ENCODE measurements at regions of chrX and their contacts with region 1.

Region 1: DNA sequence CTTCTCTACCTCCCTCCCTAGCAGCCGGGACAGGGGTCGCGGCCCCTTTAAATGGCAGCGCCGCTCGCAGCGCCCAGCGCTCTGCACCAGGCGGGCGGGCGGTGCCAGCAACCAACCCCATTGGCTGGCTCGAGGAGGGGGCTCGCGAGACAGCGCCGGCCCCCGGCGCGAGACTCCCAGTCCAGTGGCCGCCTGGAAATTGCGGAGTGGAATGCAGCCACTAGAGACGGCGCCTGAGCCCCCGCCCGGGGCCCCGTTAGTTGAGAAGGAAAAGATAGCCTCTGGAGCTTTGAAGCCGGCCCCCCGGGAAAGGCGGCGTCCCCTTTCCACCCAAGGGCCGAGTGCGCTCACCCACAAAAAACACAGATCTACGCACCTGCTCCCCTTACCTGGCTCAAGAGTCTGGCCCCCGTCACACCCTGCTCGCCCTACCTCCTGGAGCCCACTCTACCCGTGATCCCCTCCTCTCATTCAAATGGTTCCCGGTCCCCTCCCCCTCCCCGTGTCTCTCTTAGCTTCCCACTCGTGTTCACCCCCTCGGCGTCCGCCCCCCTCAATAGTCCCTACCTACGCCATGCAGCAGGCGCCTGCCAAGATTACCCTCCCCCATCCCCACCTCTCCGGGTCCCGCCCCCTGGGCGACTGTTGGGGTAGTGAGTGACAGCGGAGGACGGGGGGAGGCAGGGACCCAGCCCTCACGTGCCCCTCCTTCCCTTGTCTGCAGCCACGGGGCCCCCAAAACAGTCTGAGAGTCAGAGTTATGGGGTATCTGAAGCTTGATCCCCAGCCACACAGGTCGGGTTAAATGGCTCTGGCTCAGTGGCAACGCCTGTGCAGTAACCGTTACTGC is at the start of gene ZMYM3:
- DNase-seq: peak; percentile 92
- H3K4me3 Mint-ChIP-seq: peak within 1 kb of the TSS; percentile 93
- H3K27ac Mint-ChIP-seq: peak within 1 kb of the TSS; percentile 88
- H3K4me1 Mint-ChIP-seq: peaks cover 28% of the 10 kb centered on the region
- H3K27me3 Mint-ChIP-seq: peaks cover 2% of the 10 kb centered on the region
- total RNA-seq, gene ZMYM3: 16.9 and 20.1 TPM in 2 replicates

Region 2: DNA sequence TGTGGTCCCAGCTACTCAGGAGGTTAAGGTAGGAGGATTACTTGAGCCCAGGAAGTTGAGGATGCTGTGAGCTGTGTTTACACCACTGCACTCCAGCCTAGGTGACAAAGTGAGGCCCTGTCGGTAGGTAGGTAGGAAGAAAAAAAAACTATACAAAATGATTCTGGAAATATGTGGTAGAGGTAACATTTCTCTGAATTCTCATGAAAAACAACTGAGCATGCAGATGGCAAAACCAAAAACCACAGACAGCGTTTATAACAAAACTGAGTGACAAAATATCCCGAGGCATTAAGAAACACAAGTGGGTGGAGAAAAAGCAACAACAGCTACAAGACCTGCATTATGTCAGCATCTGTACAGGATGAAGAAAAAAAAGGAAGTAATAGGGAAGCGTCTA is 598.0 kb before region 1 on chrX:
- intact Hi-C with region 1: loop called (anchors 5 kb)
- DNase-seq: peak; percentile 61
- H3K4me3 Mint-ChIP-seq: peak overlapping the region; percentile 22
- H3K27ac Mint-ChIP-seq: peak overlapping the region; percentile 81
- H3K4me1 Mint-ChIP-seq: peaks cover 9% of the 10 kb centered on the region
- H3K27me3 Mint-ChIP-seq: no peaks in the 10 kb centered on the region

Region 3: GRCh38 chrX:71103110-71103983 is 151.0 kb before region 1 on chrX:
- intact Hi-C with region 1: loop called (anchors 10 kb)
- DNase-seq: peak; percentile 82
- H3K4me3 Mint-ChIP-seq: peak overlapping the region; percentile 83
- H3K27ac Mint-ChIP-seq: peak overlapping the region; percentile 92
- H3K4me1 Mint-ChIP-seq: peaks cover 60% of the 10 kb centered on the region
- H3K27me3 Mint-ChIP-seq: no peaks in the 10 kb centered on the region

Region 4: DNA sequence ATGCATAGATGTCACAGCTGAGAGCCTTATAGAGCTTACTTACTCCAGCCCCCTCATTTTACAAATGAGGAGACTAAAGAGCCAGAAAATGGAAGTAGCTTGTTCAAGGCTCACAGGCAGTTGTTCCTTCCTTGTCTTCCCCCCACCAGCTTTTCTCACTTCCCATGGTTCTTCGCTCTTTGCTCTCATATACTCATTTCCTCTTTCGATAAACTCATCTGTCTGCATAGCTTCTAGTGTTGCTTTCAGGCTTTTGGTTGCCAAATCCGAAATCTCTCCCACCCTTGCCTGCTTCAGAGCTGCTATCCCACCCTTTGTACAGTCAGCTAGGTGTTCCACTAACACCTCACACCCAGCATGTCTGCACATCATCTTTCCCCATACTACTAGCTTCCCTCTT is 56.3 kb before region 1 on chrX:
- intact Hi-C with region 1: loop called (anchors 5 kb)
- DNase-seq: peak; percentile 67
- H3K4me3 Mint-ChIP-seq: peak overlapping the region; percentile 91
- H3K27ac Mint-ChIP-seq: peak overlapping the region; percentile 88
- H3K4me1 Mint-ChIP-seq: peaks cover 18% of the 10 kb centered on the region
- H3K27me3 Mint-ChIP-seq: no peaks in the 10 kb centered on the region

Region 5: DNA sequence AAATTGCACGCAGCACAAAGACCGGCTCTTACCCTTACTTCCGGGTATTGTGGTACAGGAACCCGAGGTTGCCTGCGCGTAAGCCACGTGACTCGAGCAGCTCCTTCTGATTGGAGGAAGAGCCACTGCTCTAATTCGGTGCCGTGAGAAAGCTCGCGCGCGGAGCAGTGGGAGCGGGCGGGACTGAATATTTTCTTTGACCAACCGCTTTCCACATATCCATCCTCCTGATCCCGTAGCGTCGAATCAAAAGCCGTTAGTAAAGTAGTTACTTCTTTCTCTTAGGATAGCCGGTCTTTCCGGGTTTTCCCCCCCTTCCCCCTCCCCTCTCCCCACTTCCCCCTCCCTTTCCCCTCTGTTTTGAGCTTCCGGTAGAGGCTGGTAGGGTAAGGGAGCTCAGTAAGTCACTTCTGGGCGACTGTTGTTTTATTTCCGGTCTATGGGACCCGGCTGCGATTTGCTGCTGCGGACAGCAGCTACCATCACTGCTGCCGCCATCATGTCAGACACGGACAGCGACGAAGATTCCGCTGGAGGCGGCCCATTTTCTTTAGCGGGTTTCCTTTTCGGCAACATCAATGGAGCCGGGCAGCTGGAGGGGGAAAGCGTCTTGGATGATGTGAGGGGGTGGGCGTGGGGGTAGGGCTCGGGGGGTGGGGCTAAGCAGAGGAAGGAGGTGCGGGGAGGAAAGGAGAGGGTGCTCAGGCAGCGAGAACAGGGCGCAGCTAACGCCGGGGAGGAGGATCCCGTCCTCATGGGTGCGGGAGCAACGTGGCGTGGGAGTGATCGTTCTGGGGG is 111.8 kb after region 1 on chrX and contains the start of gene TAF1:
- intact Hi-C with region 1: loop called (anchors 2 kb)
- DNase-seq: peak; percentile 96
- H3K4me3 Mint-ChIP-seq: peak within 1 kb of the TSS; percentile 98
- H3K27ac Mint-ChIP-seq: peak within 1 kb of the TSS; percentile 100
- H3K4me1 Mint-ChIP-seq: peaks cover 21% of the 10 kb centered on the region
- H3K27me3 Mint-ChIP-seq: no peaks in the 10 kb centered on the region
- total RNA-seq, gene TAF1: 46.7 and 47.8 TPM in 2 replicates

Region 6: GRCh38 chrX:71504346-71504745 is 250.0 kb after region 1 on chrX:
- intact Hi-C with region 1: no loop called
- DNase-seq: no peak
- H3K4me3 Mint-ChIP-seq: no peak overlapping the region
- H3K27ac Mint-ChIP-seq: no peak overlapping the region
- H3K4me1 Mint-ChIP-seq: no peaks in the 10 kb centered on the region
- H3K27me3 Mint-ChIP-seq: no peaks in the 10 kb centered on the region

Measured in activated CD4-positive, alpha-beta T cell treated with anti-CD3 and anti-CD28 coated beads, Interleukin-2, amount 10 ng/mL, durations not matched to agents 24 days and 14 days (primary cell).